Naive thymus-derived CD4-positive, alpha-beta T cell (primary cell): ENCODE measurements at regions of chr17 and their contacts with region 1.

Region 1: DNA sequence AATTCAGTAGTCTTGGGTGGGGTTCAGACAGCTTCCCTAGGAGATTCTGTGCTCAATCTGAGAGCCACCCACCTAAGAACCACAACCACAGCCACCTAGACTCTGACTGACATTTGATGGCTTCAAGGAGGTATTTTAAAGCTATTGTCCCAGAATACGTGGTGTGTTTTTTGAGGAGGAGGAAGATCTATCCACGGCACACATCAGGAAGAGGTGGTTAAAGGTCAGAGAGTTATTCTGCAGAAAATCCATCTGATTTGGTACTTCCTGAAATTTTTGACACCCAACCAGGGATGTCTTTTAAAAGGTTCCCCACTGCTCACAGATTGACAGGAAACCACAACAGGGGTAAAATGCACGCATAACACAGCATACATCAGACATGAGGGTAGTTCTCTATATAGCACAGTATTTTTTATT is 25.1 kb downstream of the SMARCE1 start:
- DNase-seq: peak in 5 of 9 donors; percentile 38 to 60 (median 53)
- ATAC-seq: peak; percentile 74
- H3K4me3 ChIP-seq: peak overlapping the region; percentile 28
- H3K4me3 Mint-ChIP-seq: peak overlapping the region; percentile 54 to 81 (median 66)
- H3K27ac ChIP-seq: peak overlapping the region; percentile 18
- H3K27ac Mint-ChIP-seq: peak overlapping the region; percentile 11 to 88 (median 73)
- H3K4me1 ChIP-seq: peaks cover 27 to 35% of the 10 kb centered on the region in 2 donors
- H3K4me1 Mint-ChIP-seq: peaks cover 21 to 61% (median 48%) of the 10 kb centered on the region in 7 donors
- H3K27me3 ChIP-seq: no peaks in the 10 kb centered on the region
- H3K27me3 Mint-ChIP-seq: no peaks in the 10 kb centered on the region

Region 2: GRCh38 chr17:40098846-40099618 is 523.5 kb before region 1 on chr17:
- CTCF ChIA-PET with region 1: no interaction called
- POLR2A ChIA-PET with region 1: no interaction called
- intact Hi-C with region 1: no loop called
- DNase-seq: peak; percentile 94 to 99 (median 97)
- ATAC-seq: peak; percentile 78
- H3K4me3 ChIP-seq: peak overlapping the region; percentile 97
- H3K4me3 Mint-ChIP-seq: peak overlapping the region; percentile 82 to 99 (median 97)
- H3K27ac ChIP-seq: peak overlapping the region; percentile 94
- H3K27ac Mint-ChIP-seq: peak overlapping the region; percentile 75 to 100 (median 95)
- H3K4me1 ChIP-seq: peaks cover 62 to 69% of the 10 kb centered on the region in 2 donors
- H3K4me1 Mint-ChIP-seq: peaks cover 68 to 96% (median 84%) of the 10 kb centered on the region in 7 donors
- H3K27me3 ChIP-seq: no peaks in the 10 kb centered on the region
- H3K27me3 Mint-ChIP-seq: peaks cover 0 to 6% (median 0%) of the 10 kb centered on the region in 5 donors

Region 3: GRCh38 chr17:40726919-40727318 is 104.4 kb after region 1 on chr17:
- CTCF ChIA-PET with region 1: interaction called, 4 read pairs
- POLR2A ChIA-PET with region 1: no interaction called
- intact Hi-C with region 1: loop called (anchors 1 to 5 kb)
- DNase-seq: peak in 5 of 9 donors; percentile 4 to 37 (median 23)
- ATAC-seq: no peak
- H3K4me3 ChIP-seq: no peak overlapping the region
- H3K4me3 Mint-ChIP-seq: no peak overlapping the region
- H3K27ac ChIP-seq: no peak overlapping the region
- H3K27ac Mint-ChIP-seq: no peak overlapping the region
- H3K4me1 ChIP-seq: no peaks in the 10 kb centered on the region
- H3K4me1 Mint-ChIP-seq: peaks cover 0 to 2% (median 0%) of the 10 kb centered on the region in 7 donors
- H3K27me3 ChIP-seq: peaks cover 0 to 3% of the 10 kb centered on the region in 2 donors
- H3K27me3 Mint-ChIP-seq: peaks cover 5 to 44% (median 29%) of the 10 kb centered on the region in 5 donors